Activated CD8-positive, alpha-beta memory T cell treated with anti-CD3 and anti-CD28 coated beads, Interleukin-2, amount 10 ng/mL, durations not matched to agents 7 days and 5 days (primary cell): ENCODE measurements at regions of chr19 and their contacts with region 1.

Region 1: GRCh38 chr19:1794424-1795172 is 17.5 kb downstream of the ATP8B3 start:
- DNase-seq: no peak
- ATAC-seq: no peak
- H3K4me3 Mint-ChIP-seq: no peak overlapping the region
- H3K27ac Mint-ChIP-seq: no peak overlapping the region
- H3K4me1 Mint-ChIP-seq: peaks cover 9% of the 10 kb centered on the region
- H3K27me3 Mint-ChIP-seq: no peaks in the 10 kb centered on the region

Region 2: GRCh38 chr19:1540365-1540925 is 254.2 kb before region 1 on chr19:
- CTCF ChIA-PET with region 1: no interaction called
- DNase-seq: no peak
- ATAC-seq: no peak
- H3K4me3 Mint-ChIP-seq: no peak overlapping the region
- H3K27ac Mint-ChIP-seq: no peak overlapping the region
- H3K4me1 Mint-ChIP-seq: no peaks in the 10 kb centered on the region
- H3K27me3 Mint-ChIP-seq: peaks cover 8% of the 10 kb centered on the region

Region 3: DNA sequence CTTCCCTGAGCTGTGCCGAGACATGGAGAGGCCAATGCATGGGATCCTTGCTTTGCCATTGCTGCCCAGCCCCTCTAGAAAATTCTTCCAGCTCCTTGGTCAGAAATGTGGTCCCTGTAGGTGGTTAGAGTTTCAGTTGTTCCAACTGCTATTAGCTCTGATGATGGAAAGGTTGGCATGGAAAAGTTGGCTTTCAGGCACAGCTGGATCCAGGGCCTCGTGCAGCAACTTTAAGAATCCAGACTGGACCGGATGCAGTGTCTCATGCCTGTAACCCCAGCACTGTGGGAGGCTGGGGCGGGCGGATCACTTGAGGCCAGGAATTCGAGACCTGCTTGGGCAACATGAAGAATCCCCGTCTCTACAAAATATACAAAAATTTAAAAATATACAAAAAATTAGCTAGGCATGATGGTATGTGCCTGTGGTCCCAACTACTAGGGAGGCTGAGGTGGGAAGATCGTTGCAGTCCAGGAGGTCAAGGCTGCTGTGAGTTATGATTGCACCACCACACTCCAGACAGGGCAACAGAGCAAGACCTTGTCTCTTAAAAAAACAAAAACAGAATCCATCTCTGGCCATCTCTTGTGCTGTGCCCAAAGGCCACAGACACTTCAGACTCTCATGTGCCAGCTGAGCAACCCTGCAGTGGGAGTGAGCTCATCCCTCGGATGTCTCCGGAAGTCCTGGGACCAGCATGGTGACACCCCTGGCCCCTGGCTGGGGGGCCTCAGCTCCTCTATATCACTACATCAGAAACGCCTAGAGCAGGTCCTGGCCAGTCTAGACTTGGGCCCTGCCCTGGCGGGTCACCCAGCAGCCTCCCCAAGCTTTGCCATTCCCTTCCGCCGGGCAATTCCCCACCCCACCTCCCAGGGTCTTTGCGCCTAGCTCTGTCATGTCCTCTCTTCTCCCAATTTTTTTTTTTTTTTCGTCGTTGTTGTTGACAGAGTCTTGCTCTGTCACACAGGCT is 243.2 kb before region 1 on chr19:
- CTCF ChIA-PET with region 1: interaction called, 22 read pairs
- DNase-seq: no peak
- ATAC-seq: no peak
- H3K4me3 Mint-ChIP-seq: no peak overlapping the region
- H3K27ac Mint-ChIP-seq: no peak overlapping the region
- H3K4me1 Mint-ChIP-seq: peaks cover under 1% of the 10 kb centered on the region
- H3K27me3 Mint-ChIP-seq: peaks cover 4% of the 10 kb centered on the region

Region 4: GRCh38 chr19:1780272-1780958 is 14.2 kb before region 1 on chr19:
- CTCF ChIA-PET with region 1: interaction called, 11 read pairs
- DNase-seq: no peak
- ATAC-seq: no peak
- H3K4me3 Mint-ChIP-seq: no peak overlapping the region
- H3K27ac Mint-ChIP-seq: no peak overlapping the region
- H3K4me1 Mint-ChIP-seq: no peaks in the 10 kb centered on the region
- H3K27me3 Mint-ChIP-seq: peaks cover 41% of the 10 kb centered on the region

Region 5: GRCh38 chr19:1812469-1813196 is 18.0 kb after region 1 on chr19:
- CTCF ChIA-PET with region 1: interaction called, 17 read pairs
- DNase-seq: peak; percentile 99
- ATAC-seq: peak; percentile 91
- H3K4me3 Mint-ChIP-seq: peak overlapping the region; percentile 81
- H3K27ac Mint-ChIP-seq: peak overlapping the region; percentile 99
- H3K4me1 Mint-ChIP-seq: peaks cover 14% of the 10 kb centered on the region
- H3K27me3 Mint-ChIP-seq: no peaks in the 10 kb centered on the region